HCT116 (cell line): ENCODE measurements at regions of chr2 and their contacts with region 1.

Region 1: GRCh38 chr2:237421542-237422116 is 7.7 kb upstream of the COL6A3 start:
- DNase-seq: peak; percentile 73
- ATAC-seq: peak; percentile 99
- H3K4me3 ChIP-seq: peak overlapping the region; percentile 6 to 16; a peak in 2 of 4 replicates
- H3K27ac ChIP-seq: no peak overlapping the region
- H3K4me1 ChIP-seq: peaks cover 5 to 10% of the 10 kb centered on the region in 2 experiments; a peak in 3 of 4 replicates
- H3K27me3 ChIP-seq: no peaks in the 10 kb centered on the region
- CTCF ChIP-seq: peak; percentile 80 to 91 (median 90)
- POLR2A ChIP-seq: no peak
- RAD21 ChIP-seq: peak; percentile 77

Region 2: GRCh38 chr2:237154082-237154638 is 267.5 kb before region 1 on chr2:
- CTCF ChIA-PET with region 1: interaction called, 6 read pairs
- POLR2A ChIA-PET with region 1: no interaction called
- RAD21 ChIA-PET with region 1: no interaction called
- intact Hi-C with region 1: loop called (anchors 1 kb)
- DNase-seq: peak; percentile 52
- ATAC-seq: peak; percentile 91
- H3K4me3 ChIP-seq: no peak overlapping the region
- H3K27ac ChIP-seq: no peak overlapping the region
- H3K4me1 ChIP-seq: no peaks in the 10 kb centered on the region
- H3K27me3 ChIP-seq: no peaks in the 10 kb centered on the region
- CTCF ChIP-seq: peak; percentile 80 to 91 (median 88)
- POLR2A ChIP-seq: no peak
- RAD21 ChIP-seq: peak; percentile 98

Region 3: GRCh38 chr2:237165405-237166276 is 256.0 kb before region 1 on chr2:
- CTCF ChIA-PET with region 1: interaction called, 20 read pairs
- POLR2A ChIA-PET with region 1: no interaction called
- RAD21 ChIA-PET with region 1: no interaction called
- intact Hi-C with region 1: no loop called
- DNase-seq: peak; percentile 35
- ATAC-seq: peak; percentile 85
- H3K4me3 ChIP-seq: no peak overlapping the region
- H3K27ac ChIP-seq: no peak overlapping the region
- H3K4me1 ChIP-seq: no peaks in the 10 kb centered on the region
- H3K27me3 ChIP-seq: no peaks in the 10 kb centered on the region; the same call in 1 of the 2 replicates
- CTCF ChIP-seq: peak; percentile 76 to 87 (median 80)
- POLR2A ChIP-seq: no peak
- RAD21 ChIP-seq: peak; percentile 77

Region 4: GRCh38 chr2:237434866-237435311 is 13.3 kb after region 1 on chr2:
- CTCF ChIA-PET with region 1: interaction called, 11 read pairs
- POLR2A ChIA-PET with region 1: interaction called, 5 read pairs
- RAD21 ChIA-PET with region 1: no interaction called
- intact Hi-C with region 1: no loop called
- DNase-seq: no peak
- ATAC-seq: no peak
- H3K4me3 ChIP-seq: no peak overlapping the region
- H3K27ac ChIP-seq: no peak overlapping the region
- H3K4me1 ChIP-seq: peaks cover 0 to 33% of the 10 kb centered on the region in 2 experiments; a peak in 3 of 4 replicates
- H3K27me3 ChIP-seq: no peaks in the 10 kb centered on the region
- CTCF ChIP-seq: no peak
- POLR2A ChIP-seq: no peak
- RAD21 ChIP-seq: no peak

Region 5: GRCh38 chr2:237474931-237475703 is 53.5 kb after region 1 on chr2:
- CTCF ChIA-PET with region 1: interaction called, 15 read pairs
- POLR2A ChIA-PET with region 1: no interaction called
- RAD21 ChIA-PET with region 1: interaction called in 1 of 2 experiments, 3 read pairs
- intact Hi-C with region 1: no loop called
- DNase-seq: peak; percentile 37
- ATAC-seq: peak; percentile 85
- H3K4me3 ChIP-seq: peak overlapping the region; percentile 63 to 70
- H3K27ac ChIP-seq: peak overlapping the region; percentile 75
- H3K4me1 ChIP-seq: peaks cover 3 to 24% of the 10 kb centered on the region in 2 experiments; a peak in 3 of 4 replicates
- H3K27me3 ChIP-seq: no peaks in the 10 kb centered on the region
- CTCF ChIP-seq: peak; percentile 59 to 75 (median 71)
- POLR2A ChIP-seq: no peak
- RAD21 ChIP-seq: peak; percentile 64

Region 6: GRCh38 chr2:237512774-237513466 is 91.3 kb after region 1 on chr2:
- CTCF ChIA-PET with region 1: interaction called, 15 read pairs
- POLR2A ChIA-PET with region 1: no interaction called
- RAD21 ChIA-PET with region 1: no interaction called
- intact Hi-C with region 1: no loop called
- DNase-seq: peak; percentile 76
- ATAC-seq: peak; percentile 86
- H3K4me3 ChIP-seq: no peak overlapping the region
- H3K27ac ChIP-seq: no peak overlapping the region
- H3K4me1 ChIP-seq: peaks cover 0 to 6% of the 10 kb centered on the region in 2 experiments; a peak in 2 of 4 replicates
- H3K27me3 ChIP-seq: no peaks in the 10 kb centered on the region
- CTCF ChIP-seq: peak; percentile 86 to 99 (median 94)
- POLR2A ChIP-seq: no peak
- RAD21 ChIP-seq: peak; percentile 88

Region 7: GRCh38 chr2:237572021-237572741 is 150.6 kb after region 1 on chr2:
- CTCF ChIA-PET with region 1: interaction called, 43 read pairs
- POLR2A ChIA-PET with region 1: interaction called, 3 read pairs
- RAD21 ChIA-PET with region 1: interaction called, 6 to 12 read pairs
- intact Hi-C with region 1: loop called (anchors 1 kb)
- DNase-seq: peak; percentile 79
- ATAC-seq: peak; percentile 90
- H3K4me3 ChIP-seq: no peak overlapping the region
- H3K27ac ChIP-seq: no peak overlapping the region
- H3K4me1 ChIP-seq: peaks cover 12 to 30% of the 10 kb centered on the region in 2 experiments
- H3K27me3 ChIP-seq: no peaks in the 10 kb centered on the region
- CTCF ChIP-seq: peak; percentile 93 to 98 (median 97)
- POLR2A ChIP-seq: no peak
- RAD21 ChIP-seq: peak; percentile 99